WTC11 (cell line): ENCODE measurements at regions of chr17 and their contacts with region 1.

Region 1: DNA sequence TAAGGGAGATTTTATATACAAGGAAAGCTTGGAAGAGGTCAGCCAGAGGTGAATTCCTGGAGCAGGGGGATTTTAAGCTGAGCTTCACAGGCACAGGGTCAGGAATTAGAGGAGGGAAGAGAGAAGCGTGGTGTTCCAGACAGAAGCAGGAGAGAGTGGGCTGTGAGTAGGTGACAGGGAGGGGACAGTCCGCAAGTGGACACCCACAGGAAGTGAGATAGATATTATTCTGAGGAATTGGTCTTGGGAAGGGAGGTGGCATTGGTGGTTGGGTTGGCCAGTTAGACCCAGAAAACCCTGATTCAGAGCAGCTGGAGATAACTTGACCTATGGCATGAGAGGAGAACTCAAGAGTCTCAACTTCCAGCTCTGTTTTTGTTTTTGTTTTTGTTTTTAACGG is 14.7 kb downstream of the PHB1 start:
- DNase-seq: no peak
- ATAC-seq: no peak
- H3K4me3 Mint-ChIP-seq: no peak overlapping the region
- H3K27ac Mint-ChIP-seq: no peak overlapping the region
- H3K4me1 Mint-ChIP-seq: 0 out of 2 replicates have a peak, but pooled peaks cover 4% of the 10 kb centered on the region
- H3K27me3 Mint-ChIP-seq: no peaks in the 10 kb centered on the region
- CTCF ChIP-seq: no peak

Region 2: DNA sequence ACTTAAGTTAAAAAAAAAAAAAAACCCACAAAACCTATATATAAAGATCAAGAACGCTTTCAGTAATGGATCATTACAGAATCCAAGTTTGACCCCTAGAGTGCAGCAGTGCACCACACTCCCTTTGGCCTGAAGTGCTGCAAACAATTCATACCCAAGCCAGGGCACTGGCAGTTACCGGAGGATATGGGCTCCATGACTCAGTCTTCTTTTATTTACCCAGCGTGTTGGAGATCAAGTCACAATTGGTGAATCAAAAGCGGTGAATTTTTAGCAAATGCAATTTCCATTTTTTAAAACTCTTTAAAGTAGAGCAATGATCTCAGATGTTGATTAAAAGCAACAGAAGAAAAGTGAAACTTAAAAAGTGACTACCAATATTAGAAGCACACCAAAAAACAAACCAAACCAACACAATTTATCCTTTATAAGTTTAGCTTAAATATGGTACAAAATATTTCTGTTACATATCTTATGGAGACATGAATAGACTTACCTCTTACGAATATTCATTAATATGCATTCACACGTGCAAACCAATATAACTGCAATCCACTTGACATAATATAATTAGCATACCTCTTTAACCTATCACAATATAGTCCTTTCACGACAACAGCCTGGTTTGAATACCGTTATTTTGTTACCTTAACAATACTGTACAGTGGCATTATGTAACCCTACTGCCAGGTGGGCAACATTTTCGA is 84.3 kb before region 1 on chr17:
- CTCF ChIA-PET with region 1: interaction called, 14 read pairs
- POLR2A ChIA-PET with region 1: no interaction called
- DNase-seq: peak; percentile 63
- ATAC-seq: peak; percentile 93
- H3K4me3 Mint-ChIP-seq: no peak overlapping the region
- H3K27ac Mint-ChIP-seq: peak overlapping the region; percentile 4; the same call in 1 of the 2 replicates
- H3K4me1 Mint-ChIP-seq: peaks cover 10% of the 10 kb centered on the region
- H3K27me3 Mint-ChIP-seq: no peaks in the 10 kb centered on the region
- CTCF ChIP-seq: no peak

Region 3: GRCh38 chr17:49361902-49362722 is 37.9 kb before region 1 on chr17 and contains the start of gene ZNF652:
- CTCF ChIA-PET with region 1: interaction called, 13 read pairs
- POLR2A ChIA-PET with region 1: interaction called, 3 read pairs
- DNase-seq: peak; percentile 98
- ATAC-seq: peak; percentile 85
- H3K4me3 Mint-ChIP-seq: peak within 1 kb of the TSS; percentile 91
- H3K27ac Mint-ChIP-seq: peak within 1 kb of the TSS; percentile 93
- H3K4me1 Mint-ChIP-seq: peaks cover 42% of the 10 kb centered on the region
- H3K27me3 Mint-ChIP-seq: no peaks in the 10 kb centered on the region
- CTCF ChIP-seq: no peak
- total RNA-seq, gene ZNF652: 40.8 to 46.0 TPM (median 44.2 TPM) in 3 replicates

Region 4: DNA sequence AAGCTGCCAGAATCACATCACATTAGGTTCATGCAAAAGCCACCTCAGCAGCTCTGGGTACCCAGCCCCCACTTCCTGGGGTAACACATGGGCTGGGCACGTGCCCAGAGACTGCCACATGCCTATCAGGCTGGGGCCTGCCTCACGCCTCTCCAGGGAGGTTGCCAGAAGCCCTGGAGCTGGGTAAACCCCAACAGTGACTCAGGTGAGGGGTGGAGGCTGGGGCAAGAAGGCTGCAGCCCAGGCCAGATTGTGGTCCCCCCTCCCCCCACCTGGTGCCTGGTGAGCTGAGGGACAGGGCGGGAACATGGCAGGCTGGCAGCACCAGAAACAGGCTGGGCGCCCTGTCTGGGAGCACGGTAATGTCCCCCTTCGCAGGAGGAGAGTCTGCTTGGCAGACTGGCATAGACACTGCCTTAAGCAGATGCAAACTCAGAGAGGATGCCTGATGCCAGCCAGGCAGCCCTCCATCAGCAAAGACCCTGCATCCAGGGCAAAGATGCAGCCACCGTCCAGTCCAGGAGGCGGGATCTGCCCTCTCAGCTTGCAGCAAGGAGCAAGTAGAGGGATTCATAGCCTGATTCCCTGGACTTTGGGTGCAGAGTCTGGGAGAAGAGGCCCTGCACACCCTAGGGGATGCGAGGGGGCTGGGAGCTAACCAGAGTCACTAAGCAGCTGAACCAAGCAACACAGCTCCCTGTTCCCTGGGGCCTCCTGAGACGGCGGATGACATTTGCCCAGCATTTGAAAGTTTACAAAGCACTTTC is 123.9 kb after region 1 on chr17:
- CTCF ChIA-PET with region 1: no interaction called
- POLR2A ChIA-PET with region 1: no interaction called
- DNase-seq: peak; percentile 9
- ATAC-seq: no peak
- H3K4me3 Mint-ChIP-seq: no peak overlapping the region
- H3K27ac Mint-ChIP-seq: no peak overlapping the region
- H3K4me1 Mint-ChIP-seq: peaks cover 3% of the 10 kb centered on the region; the same call in 1 of the 2 replicates
- H3K27me3 Mint-ChIP-seq: no peaks in the 10 kb centered on the region; the same call in 1 of the 2 replicates
- CTCF ChIP-seq: no peak